ENCODE measurements at regions of chr2 and their contacts with region 1.

Region 1: GRCh38 chr2:61862085-61862484 is 8.2 kb upstream of the FAM161A start:
- DNase-seq: no peak
- ATAC-seq: no peak
- H3K4me3 ChIP-seq: no peak overlapping the region
- H3K4me3 Mint-ChIP-seq: no peak overlapping the region
- H3K27ac ChIP-seq: no peak overlapping the region
- H3K27ac Mint-ChIP-seq: no peak overlapping the region
- H3K4me1 ChIP-seq: no peaks in the 10 kb centered on the region
- H3K4me1 Mint-ChIP-seq: no peaks in the 10 kb centered on the region
- H3K27me3 ChIP-seq: no peaks in the 10 kb centered on the region
- H3K27me3 Mint-ChIP-seq: no peaks in the 10 kb centered on the region

Region 2: DNA sequence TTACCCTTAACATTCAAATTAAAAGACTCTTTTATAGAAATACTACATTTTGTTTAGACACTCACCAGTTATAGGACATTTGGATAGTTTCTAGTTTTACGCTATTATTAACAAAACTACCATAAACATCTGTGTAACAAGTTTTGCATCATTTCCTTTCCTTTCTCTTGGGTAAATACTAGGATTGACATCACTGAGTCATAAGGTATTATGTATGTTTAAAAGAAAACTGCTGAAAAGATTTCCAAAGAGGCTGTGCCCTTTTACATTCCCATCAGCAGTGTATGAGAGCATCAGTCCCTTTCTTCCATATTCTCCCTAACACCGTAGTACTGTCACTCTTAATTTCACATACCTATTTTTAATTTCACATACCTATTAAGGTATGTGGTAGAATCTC is 521.8 kb before region 1 on chr2:
- CTCF ChIA-PET with region 1: no interaction called
- POLR2A ChIA-PET with region 1: interaction called in 1 of 2 experiments, 10 read pairs
- DNase-seq: no peak
- ATAC-seq: no peak
- H3K4me3 ChIP-seq: no peak overlapping the region
- H3K4me3 Mint-ChIP-seq: no peak overlapping the region
- H3K27ac ChIP-seq: no peak overlapping the region
- H3K27ac Mint-ChIP-seq: no peak overlapping the region
- H3K4me1 ChIP-seq: no peaks in the 10 kb centered on the region
- H3K4me1 Mint-ChIP-seq: no peaks in the 10 kb centered on the region
- H3K27me3 ChIP-seq: no peaks in the 10 kb centered on the region
- H3K27me3 Mint-ChIP-seq: no peaks in the 10 kb centered on the region

Region 3: GRCh38 chr2:61905372-61906185 is 43.5 kb after region 1 on chr2 and contains the start of gene COMMD1:
- CTCF ChIA-PET with region 1: no interaction called
- POLR2A ChIA-PET with region 1: no interaction called
- DNase-seq: peak; percentile 65 to 86 (median 76)
- ATAC-seq: peak; percentile 99
- H3K4me3 ChIP-seq: peak within 1 kb of the TSS; percentile 81 to 97
- H3K4me3 Mint-ChIP-seq: peak within 1 kb of the TSS; percentile 94 to 99 (median 95)
- H3K27ac ChIP-seq: peak within 1 kb of the TSS; percentile 59
- H3K27ac Mint-ChIP-seq: peak within 1 kb of the TSS; percentile 67 to 86
- H3K4me1 ChIP-seq: peaks cover 3 to 4% of the 10 kb centered on the region in 2 experiments
- H3K4me1 Mint-ChIP-seq: peaks cover 21 to 30% (median 29%) of the 10 kb centered on the region in 3 donors
- H3K27me3 ChIP-seq: no peaks in the 10 kb centered on the region
- H3K27me3 Mint-ChIP-seq: no peaks in the 10 kb centered on the region
- total RNA-seq, gene COMMD1: 18.2 to 23.8 (median 19.6) TPM

Measured in T-cell (primary cell).